ENCODE measurements at regions of chr2 and their contacts with region 1.

Region 1: GRCh38 chr2:24456599-24457556 is 34.2 kb upstream of the NCOA1 start:
- DNase-seq: peak; percentile 63
- H3K4me3 ChIP-seq: no peak overlapping the region
- CTCF ChIP-seq: no peak

Region 2: GRCh38 chr2:24490674-24491625 is 34.1 kb after region 1 on chr2 and contains the start of gene NCOA1:
- in situ Hi-C with region 1: no loop called
- DNase-seq: peak; percentile 61
- H3K4me3 ChIP-seq: peak within 1 kb of the TSS; percentile 66
- CTCF ChIP-seq: peak; percentile 2

Region 3: DNA sequence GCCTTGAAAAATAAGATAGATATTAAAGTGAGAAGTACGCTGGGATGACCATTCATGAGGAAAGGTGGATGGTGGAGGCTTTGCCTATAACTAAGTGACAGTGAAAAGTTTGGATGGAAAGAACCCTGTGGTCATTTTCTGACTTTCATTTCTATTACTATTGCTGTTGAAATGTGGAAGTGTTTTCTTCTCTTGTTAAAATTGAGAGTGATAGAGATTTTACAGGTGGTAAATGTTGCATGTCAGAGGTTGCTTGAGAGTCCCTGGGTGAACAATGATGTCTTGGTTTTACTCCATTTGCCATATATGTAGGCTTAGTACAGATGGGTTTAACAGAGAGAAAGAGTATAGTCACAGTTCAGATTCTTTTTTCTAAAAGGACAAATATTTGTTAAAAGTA is 52.5 kb after region 1 on chr2:
- in situ Hi-C with region 1: loop called (anchors 5 kb)
- DNase-seq: no peak
- H3K4me3 ChIP-seq: no peak overlapping the region
- CTCF ChIP-seq: no peak